Thyroid gland (tissue), 4 donors: ENCODE measurements at regions of chr1 and their contacts with region 1.

Region 1: GRCh38 chr1:206912445-206913095 is 9.2 kb downstream of the FCMR start:
- DNase-seq: peak; percentile 73 to 76
- H3K4me3 ChIP-seq: no peak overlapping the region
- H3K27ac ChIP-seq: no peak overlapping the region
- H3K4me1 ChIP-seq: peaks cover 5 to 30% of the 10 kb centered on the region in 2 donors
- H3K27me3 ChIP-seq: no peaks in the 10 kb centered on the region
- CTCF ChIP-seq: peak; percentile 66 to 90 (median 84)
- POLR2A ChIP-seq: no peak

Region 2: DNA sequence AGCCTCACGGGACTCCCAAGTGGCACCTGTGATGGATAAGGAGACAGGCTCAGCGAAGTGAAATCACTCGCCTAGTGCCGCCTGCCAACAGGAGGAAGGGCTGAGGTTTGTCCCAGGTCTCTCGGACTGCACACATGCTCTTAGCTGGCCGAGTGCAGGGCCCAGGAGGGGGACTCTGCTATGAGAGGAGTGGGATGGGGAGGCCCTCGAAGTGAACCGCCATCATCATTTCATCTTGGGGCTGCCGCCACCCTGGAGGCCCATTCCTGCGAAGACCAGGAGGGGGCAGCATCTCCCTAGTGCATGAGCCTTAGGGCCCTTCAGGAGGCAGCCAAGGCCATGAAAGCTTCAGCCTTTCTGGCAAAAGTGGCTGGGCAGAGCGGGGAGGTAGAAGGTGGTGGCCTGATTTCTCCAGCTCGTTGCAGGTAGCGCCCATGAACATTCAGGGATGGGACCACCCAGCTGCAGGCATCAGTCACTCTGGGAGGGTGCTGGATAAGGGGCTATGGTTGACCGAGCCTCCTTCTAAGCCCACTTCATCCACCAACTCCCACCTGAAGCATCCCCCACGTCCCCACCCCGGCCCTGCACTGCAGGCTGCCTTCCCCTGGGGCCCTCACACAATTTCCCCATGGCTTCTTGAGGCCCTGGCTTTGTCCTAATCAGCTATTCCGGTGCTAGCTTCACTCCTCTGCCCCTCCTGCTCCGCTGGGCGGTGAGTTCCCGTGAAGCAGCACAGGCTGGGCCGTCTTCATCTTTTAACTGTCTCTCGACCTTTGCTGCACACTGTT is 422.4 kb before region 1 on chr1:
- intact Hi-C with region 1: loop called (anchors 10 kb)
- DNase-seq: peak; percentile 83 to 84
- H3K4me3 ChIP-seq: no peak overlapping the region
- H3K27ac ChIP-seq: peak overlapping the region in 1 of 3 donors; percentile 46
- H3K4me1 ChIP-seq: peaks cover 6% of the 10 kb centered on the region in 2 donors
- H3K27me3 ChIP-seq: no peaks in the 10 kb centered on the region
- CTCF ChIP-seq: peak; percentile 75 to 98 (median 96)
- POLR2A ChIP-seq: no peak

Region 3: GRCh38 chr1:206635080-206635977 is 277.2 kb before region 1 on chr1 and contains the start of gene DYRK3:
- intact Hi-C with region 1: loop called (anchors 10 kb)
- DNase-seq: peak; percentile 96
- H3K4me3 ChIP-seq: peak within 1 kb of the TSS; percentile 31 to 86 (median 61)
- H3K27ac ChIP-seq: peak within 1 kb of the TSS in 2 of 3 donors; percentile 75 to 83
- H3K4me1 ChIP-seq: peaks cover 20% of the 10 kb centered on the region in 2 donors
- H3K27me3 ChIP-seq: no peaks in the 10 kb centered on the region
- CTCF ChIP-seq: peak in 2 of 6 experiments; percentile 9 to 27
- POLR2A ChIP-seq: peak; percentile 81 to 98
- total RNA-seq, gene DYRK3: 14.5 to 21.2 (median 15.9) TPM

Region 4: GRCh38 chr1:206725109-206725963 is 187.2 kb before region 1 on chr1:
- intact Hi-C with region 1: loop called (anchors 5 kb)
- DNase-seq: peak; percentile 36 to 48
- H3K4me3 ChIP-seq: no peak overlapping the region
- H3K27ac ChIP-seq: peak overlapping the region in 1 of 3 donors; percentile 73
- H3K4me1 ChIP-seq: peaks cover 35 to 49% of the 10 kb centered on the region in 2 donors
- H3K27me3 ChIP-seq: no peaks in the 10 kb centered on the region
- CTCF ChIP-seq: peak in 4 of 6 experiments; percentile 29 to 43 (median 32)
- POLR2A ChIP-seq: no peak

Region 5: DNA sequence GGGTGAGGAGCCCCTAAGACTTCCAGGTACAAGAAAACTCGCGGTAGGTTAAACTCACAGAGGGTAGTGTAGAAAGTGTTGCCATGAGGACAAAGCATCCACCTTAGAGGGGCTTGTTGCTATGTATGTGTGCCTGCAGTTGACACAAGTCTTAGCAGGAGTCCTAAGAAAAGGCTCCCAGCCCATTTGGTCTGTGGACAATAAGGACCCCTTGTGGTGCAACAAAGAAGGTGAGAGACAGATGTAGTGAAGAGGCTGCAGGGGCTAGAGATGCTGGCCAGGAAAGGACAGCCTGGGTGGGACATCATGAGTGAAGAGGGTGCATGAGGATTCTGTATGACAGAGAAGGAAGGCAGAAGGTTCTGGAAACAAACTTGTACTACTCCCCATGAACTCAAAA is 104.0 kb before region 1 on chr1:
- intact Hi-C with region 1: loop called (anchors 10 kb)
- DNase-seq: no peak
- H3K4me3 ChIP-seq: no peak overlapping the region
- H3K27ac ChIP-seq: no peak overlapping the region
- H3K4me1 ChIP-seq: no peaks in the 10 kb centered on the region
- H3K27me3 ChIP-seq: no peaks in the 10 kb centered on the region
- CTCF ChIP-seq: peak in 1 of 6 experiments; percentile 9
- POLR2A ChIP-seq: no peak

Region 6: DNA sequence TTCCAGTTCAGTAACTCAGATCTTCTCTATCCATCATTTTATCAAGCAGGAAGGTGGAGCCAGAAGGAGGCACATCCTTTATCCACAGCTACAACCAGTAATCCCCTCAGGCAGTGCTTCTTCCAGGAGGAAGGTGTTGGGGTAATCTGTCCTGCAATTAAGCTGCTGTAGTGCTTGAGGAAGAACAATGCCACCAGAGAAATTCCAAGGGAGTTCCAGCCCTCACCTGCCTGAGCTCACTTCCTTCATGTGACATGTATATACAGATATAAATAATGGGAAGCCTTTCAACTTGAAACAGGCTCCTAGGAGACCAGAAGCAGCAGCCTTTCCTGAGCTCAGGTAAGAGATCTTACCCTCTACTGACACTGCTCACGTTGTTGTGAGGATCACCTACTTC is 49.3 kb before region 1 on chr1:
- intact Hi-C with region 1: loop called (anchors 5 kb)
- DNase-seq: no peak
- H3K4me3 ChIP-seq: no peak overlapping the region
- H3K27ac ChIP-seq: no peak overlapping the region
- H3K4me1 ChIP-seq: peaks cover 0 to 4% of the 10 kb centered on the region in 2 donors
- H3K27me3 ChIP-seq: no peaks in the 10 kb centered on the region
- CTCF ChIP-seq: no peak
- POLR2A ChIP-seq: no peak